Activated CD8-positive, alpha-beta T cell treated with anti-CD3 and anti-CD28 coated beads for 36 hours (primary cell): ENCODE measurements at regions of chr1 and their contacts with region 1.

Region 1: DNA sequence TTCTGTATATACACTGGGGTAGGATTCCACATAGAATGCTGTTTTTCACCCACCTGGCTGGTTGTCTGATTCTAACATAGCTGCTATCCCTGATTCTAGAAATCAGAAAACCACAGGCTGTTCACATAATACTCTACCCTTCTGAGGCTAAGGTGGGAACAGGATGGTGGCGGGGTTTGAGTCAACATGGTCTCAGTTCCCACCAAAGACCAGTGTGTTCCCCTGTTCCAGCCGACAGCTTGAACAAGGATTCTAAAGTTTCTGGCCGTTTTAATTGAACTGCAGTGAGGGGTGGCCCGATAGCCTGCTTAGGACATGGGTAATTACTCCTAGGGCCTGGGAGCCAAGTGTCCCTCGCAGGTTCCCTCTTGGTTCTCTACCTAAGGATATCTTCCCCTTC is 38.4 kb downstream of the PEX14 start:
- DNase-seq: peak; percentile 50
- ATAC-seq: no peak
- H3K4me3 Mint-ChIP-seq: no peak overlapping the region
- H3K27ac Mint-ChIP-seq: peak overlapping the region; percentile 48
- H3K4me1 Mint-ChIP-seq: peaks cover 79% of the 10 kb centered on the region
- H3K27me3 Mint-ChIP-seq: no peaks in the 10 kb centered on the region
- CTCF ChIP-seq: no peak

Region 2: DNA sequence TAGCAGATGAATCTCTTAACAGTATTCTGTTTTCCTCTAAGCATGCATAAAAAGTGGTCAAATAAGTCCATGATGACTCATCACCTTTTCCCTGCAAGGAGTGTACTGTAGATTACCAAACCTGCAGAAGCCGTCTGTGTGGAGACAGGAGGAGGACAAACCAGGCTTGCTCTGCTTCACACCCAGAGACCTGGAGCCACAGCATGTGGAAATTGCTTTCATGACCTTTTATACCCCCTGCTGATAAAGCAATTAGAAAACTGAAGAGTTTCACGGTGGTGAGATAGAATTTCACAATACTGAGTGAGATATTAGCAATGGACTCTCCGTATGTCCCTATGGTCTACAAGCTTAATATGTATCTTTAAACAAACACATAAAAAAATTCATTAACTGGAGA is 54.0 kb before region 1 on chr1:
- CTCF ChIA-PET with region 1: no interaction called
- POLR2A ChIA-PET with region 1: no interaction called
- intact Hi-C with region 1: no loop called
- DNase-seq: no peak
- ATAC-seq: no peak
- H3K4me3 Mint-ChIP-seq: no peak overlapping the region
- H3K27ac Mint-ChIP-seq: no peak overlapping the region
- H3K4me1 Mint-ChIP-seq: peaks cover 2% of the 10 kb centered on the region
- H3K27me3 Mint-ChIP-seq: no peaks in the 10 kb centered on the region
- CTCF ChIP-seq: no peak

Region 3: GRCh38 chr1:10530281-10530740 is 17.1 kb after region 1 on chr1:
- CTCF ChIA-PET with region 1: interaction called, 4 read pairs
- POLR2A ChIA-PET with region 1: interaction called, 4 read pairs
- intact Hi-C with region 1: loop called (anchors 2 kb)
- DNase-seq: no peak
- ATAC-seq: no peak
- H3K4me3 Mint-ChIP-seq: no peak overlapping the region
- H3K27ac Mint-ChIP-seq: no peak overlapping the region
- H3K4me1 Mint-ChIP-seq: peaks cover 14% of the 10 kb centered on the region
- H3K27me3 Mint-ChIP-seq: no peaks in the 10 kb centered on the region
- CTCF ChIP-seq: peak; percentile 29

Region 4: GRCh38 chr1:10724948-10725847 is 212.0 kb after region 1 on chr1:
- CTCF ChIA-PET with region 1: no interaction called
- POLR2A ChIA-PET with region 1: no interaction called
- intact Hi-C with region 1: no loop called
- DNase-seq: no peak
- ATAC-seq: no peak
- H3K4me3 Mint-ChIP-seq: no peak overlapping the region
- H3K27ac Mint-ChIP-seq: no peak overlapping the region
- H3K4me1 Mint-ChIP-seq: no peaks in the 10 kb centered on the region
- H3K27me3 Mint-ChIP-seq: no peaks in the 10 kb centered on the region
- CTCF ChIP-seq: no peak

Region 5: GRCh38 chr1:10765734-10766478 is 252.7 kb after region 1 on chr1:
- CTCF ChIA-PET with region 1: no interaction called
- POLR2A ChIA-PET with region 1: no interaction called
- intact Hi-C with region 1: no loop called
- DNase-seq: no peak
- ATAC-seq: no peak
- H3K4me3 Mint-ChIP-seq: no peak overlapping the region
- H3K27ac Mint-ChIP-seq: no peak overlapping the region
- H3K4me1 Mint-ChIP-seq: no peaks in the 10 kb centered on the region
- H3K27me3 Mint-ChIP-seq: no peaks in the 10 kb centered on the region
- CTCF ChIP-seq: no peak